Psoas muscle (tissue), 8 donors: ENCODE measurements at regions of chr12 and their contacts with region 1.

Region 1: GRCh38 chr12:48618541-48618940 is 48.7 kb upstream of the LALBA start:
- DNase-seq: peak; percentile 33 to 63
- ATAC-seq: peak; percentile 76 to 90 (median 81)
- H3K4me3 ChIP-seq: no peak overlapping the region
- H3K27ac ChIP-seq: no peak overlapping the region
- H3K4me1 ChIP-seq: no peaks in the 10 kb centered on the region
- H3K27me3 ChIP-seq: peaks cover 0 to 12% (median 0%) of the 10 kb centered on the region in 3 donors
- CTCF ChIP-seq: peak; percentile 98

Region 2: DNA sequence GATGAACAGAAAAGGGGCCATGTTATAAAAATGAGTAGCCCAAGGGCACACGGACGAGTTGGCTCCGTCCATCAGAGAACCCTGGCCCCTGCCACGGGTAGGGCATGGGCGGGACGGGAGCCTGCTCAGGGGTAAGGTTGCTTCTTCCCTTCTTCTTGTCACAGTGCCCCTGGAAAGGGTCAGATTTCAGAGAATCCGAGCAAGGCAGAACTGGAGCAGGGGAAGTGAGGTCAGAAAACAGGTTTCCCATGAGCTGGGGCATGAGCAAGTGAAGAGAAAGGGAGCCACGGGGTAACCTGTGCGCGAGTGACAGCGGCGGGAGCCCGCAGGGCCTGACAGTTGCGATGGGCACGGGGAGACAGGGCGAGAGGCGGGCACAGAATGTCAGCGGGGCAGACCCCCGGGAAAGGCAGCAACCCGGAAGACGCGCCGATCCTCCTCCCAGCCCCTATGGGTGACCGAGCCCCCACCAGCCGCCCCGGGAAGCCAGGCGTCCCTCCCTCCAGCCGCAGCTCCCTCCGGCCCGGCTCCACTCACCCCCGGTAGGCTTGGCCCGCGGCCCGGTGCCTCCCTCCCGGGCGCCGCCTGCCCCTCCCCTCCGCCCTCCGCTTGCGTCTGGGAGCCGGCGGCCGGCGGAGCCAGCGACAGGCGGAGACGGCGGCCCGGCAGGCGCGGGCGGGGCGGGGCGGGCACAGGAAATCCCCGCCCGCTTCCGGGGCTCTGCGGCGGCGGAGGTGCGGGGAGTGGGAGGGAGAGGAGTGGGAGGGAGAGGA is 268.1 kb before region 1 on chr12 and contains the start of gene ZNF641:
- intact Hi-C with region 1: loop called in 1 of 2 experiments (anchors 10 kb)
- DNase-seq: peak; percentile 87 to 91
- ATAC-seq: peak; percentile 93 to 97 (median 94)
- H3K4me3 ChIP-seq: peak within 1 kb of the TSS; percentile 86
- H3K27ac ChIP-seq: peak within 1 kb of the TSS; percentile 97
- H3K4me1 ChIP-seq: peaks cover 18% of the 10 kb centered on the region
- H3K27me3 ChIP-seq: no peaks in the 10 kb centered on the region
- CTCF ChIP-seq: no peak
- total RNA-seq, gene ZNF641: 17.4 to 41.5 (median 22.5) TPM

Region 3: DNA sequence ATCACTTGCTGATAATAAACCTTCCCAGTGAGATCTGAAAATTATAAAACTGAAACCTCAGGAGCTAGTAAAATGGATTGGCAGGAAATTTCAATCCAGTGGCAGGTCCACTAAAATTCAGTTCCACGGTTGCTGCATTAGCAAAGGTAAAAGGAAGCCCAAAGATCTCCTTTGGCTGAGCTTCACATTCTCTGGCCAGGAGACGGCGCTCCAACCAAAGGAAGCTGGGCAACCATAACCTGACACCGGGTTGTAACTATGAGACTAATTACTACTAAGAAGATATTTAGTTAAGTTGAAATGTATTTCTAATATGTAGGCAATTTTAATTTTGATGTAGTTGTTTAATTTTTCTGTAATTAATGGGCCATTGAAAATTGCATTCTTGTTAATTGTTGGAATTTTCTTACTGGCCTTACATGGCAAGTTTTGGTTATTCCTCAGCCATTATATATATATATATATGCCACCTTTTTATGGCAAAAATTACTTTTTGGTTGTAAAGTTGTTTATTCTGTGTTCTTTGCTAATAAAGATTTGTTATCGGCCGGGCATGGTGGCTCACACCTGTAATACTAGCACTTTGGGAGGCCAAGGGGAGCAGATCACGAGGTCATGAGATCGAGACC is 76.1 kb before region 1 on chr12:
- intact Hi-C with region 1: loop called in 1 of 2 experiments (anchors 2 kb)
- DNase-seq: no peak
- ATAC-seq: no peak
- H3K4me3 ChIP-seq: no peak overlapping the region
- H3K27ac ChIP-seq: no peak overlapping the region
- H3K4me1 ChIP-seq: no peaks in the 10 kb centered on the region
- H3K27me3 ChIP-seq: peaks cover 0 to 6% (median 2%) of the 10 kb centered on the region in 3 donors
- CTCF ChIP-seq: peak; percentile 43

Region 4: GRCh38 chr12:48556631-48557030 is 61.9 kb before region 1 on chr12:
- intact Hi-C with region 1: no loop called
- DNase-seq: no peak
- ATAC-seq: no peak
- H3K4me3 ChIP-seq: no peak overlapping the region
- H3K27ac ChIP-seq: no peak overlapping the region
- H3K4me1 ChIP-seq: no peaks in the 10 kb centered on the region
- H3K27me3 ChIP-seq: peaks cover 0 to 4% (median 0%) of the 10 kb centered on the region in 3 donors
- CTCF ChIP-seq: no peak

Region 5: DNA sequence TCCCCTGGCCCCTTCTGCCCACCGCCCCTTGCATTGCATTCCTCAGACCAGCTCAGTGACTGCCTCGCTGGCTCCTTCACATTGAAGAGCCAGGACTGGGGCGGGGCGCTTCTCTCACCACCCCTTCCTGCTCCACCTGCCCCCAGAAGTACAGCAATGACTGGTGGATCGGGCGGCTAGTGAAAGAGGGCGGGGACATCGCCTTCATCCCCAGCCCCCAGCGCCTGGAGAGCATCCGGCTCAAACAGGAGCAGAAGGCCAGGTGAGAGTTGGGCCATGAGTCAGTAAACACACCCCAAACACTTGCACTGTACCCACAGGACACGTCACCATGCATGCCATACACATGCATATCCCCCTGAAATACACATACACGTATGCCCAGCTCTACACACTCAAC is 205.6 kb after region 1 on chr12:
- intact Hi-C with region 1: no loop called
- DNase-seq: no peak
- ATAC-seq: no peak
- H3K4me3 ChIP-seq: no peak overlapping the region
- H3K27ac ChIP-seq: no peak overlapping the region
- H3K4me1 ChIP-seq: no peaks in the 10 kb centered on the region
- H3K27me3 ChIP-seq: peaks cover 0 to 3% (median 2%) of the 10 kb centered on the region in 3 donors
- CTCF ChIP-seq: no peak